ENCODE measurements at regions of chr6 and their contacts with region 1.

Region 1: DNA sequence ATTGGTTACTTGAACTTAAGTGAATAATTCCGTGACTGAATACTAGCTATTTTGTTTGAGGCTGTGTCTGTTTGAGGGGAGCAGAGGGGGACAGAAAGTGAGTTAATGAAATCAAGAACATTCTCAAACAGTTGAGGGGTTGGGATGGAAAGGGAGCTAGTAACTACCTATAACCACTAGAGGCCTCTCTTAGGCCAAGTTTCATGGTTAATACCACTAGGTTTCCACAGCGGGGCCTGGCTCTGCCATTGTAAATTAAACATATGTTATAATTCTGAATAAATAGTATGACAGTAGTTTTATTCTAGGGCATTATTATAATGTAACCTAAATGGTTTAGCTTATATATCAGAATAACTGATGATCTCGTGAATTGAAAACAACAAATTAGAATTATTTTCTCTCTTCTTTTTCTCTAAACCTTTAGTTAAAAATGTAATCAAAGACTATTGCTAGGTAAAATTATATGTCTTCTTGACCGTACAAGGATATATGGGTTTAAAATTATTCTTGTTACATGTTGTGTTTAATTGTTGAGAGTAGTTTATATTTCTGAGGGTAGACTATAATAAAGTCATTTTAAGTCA is 108.1 kb downstream of the BCKDHB start:
- DNase-seq: peak in 1 of 5 donors; percentile 31
- ATAC-seq: peak in 3 of 4 donors; percentile 75 to 83 (median 77)
- H3K4me3 ChIP-seq: no peak overlapping the region
- H3K27ac ChIP-seq: peak overlapping the region in 1 of 12 donors; percentile 7
- H3K4me1 ChIP-seq: peaks cover 0 to 31% (median 8%) of the 10 kb centered on the region in 12 donors
- H3K27me3 ChIP-seq: no peaks in the 10 kb centered on the region
- CTCF ChIP-seq: peak; percentile 52 to 85 (median 72)
- POLR2A ChIP-seq: no peak

Region 2: GRCh38 chr6:80143419-80143937 is 71.1 kb before region 1 on chr6:
- intact Hi-C with region 1: loop called in 2 of 10 experiments (anchors 5 kb)
- DNase-seq: peak in 4 of 5 donors; percentile 48 to 81 (median 63)
- ATAC-seq: peak; percentile 35 to 85 (median 69)
- H3K4me3 ChIP-seq: no peak overlapping the region
- H3K27ac ChIP-seq: peak overlapping the region in 4 of 12 donors; percentile 0 to 69 (median 14)
- H3K4me1 ChIP-seq: peaks cover 3 to 35% (median 22%) of the 10 kb centered on the region in 12 donors
- H3K27me3 ChIP-seq: no peaks in the 10 kb centered on the region
- CTCF ChIP-seq: no peak
- POLR2A ChIP-seq: no peak

Region 3: GRCh38 chr6:80325742-80326141 is 111.2 kb after region 1 on chr6:
- intact Hi-C with region 1: loop called in 4 of 10 experiments (anchors 10 kb)
- DNase-seq: no peak
- ATAC-seq: no peak
- H3K4me3 ChIP-seq: no peak overlapping the region
- H3K27ac ChIP-seq: no peak overlapping the region
- H3K4me1 ChIP-seq: peaks cover 0 to 4% (median 0%) of the 10 kb centered on the region in 12 donors
- H3K27me3 ChIP-seq: no peaks in the 10 kb centered on the region
- CTCF ChIP-seq: no peak
- POLR2A ChIP-seq: no peak

Region 4: GRCh38 chr6:80338201-80338836 is 123.8 kb after region 1 on chr6:
- intact Hi-C with region 1: loop called in 3 of 10 experiments (anchors 10 kb)
- DNase-seq: peak; percentile 35 to 78 (median 54)
- ATAC-seq: peak in 3 of 4 donors; percentile 74 to 77 (median 76)
- H3K4me3 ChIP-seq: peak overlapping the region in 2 of 12 donors; percentile 14 to 24
- H3K27ac ChIP-seq: no peak overlapping the region
- H3K4me1 ChIP-seq: peaks cover 0 to 6% (median 0%) of the 10 kb centered on the region in 12 donors
- H3K27me3 ChIP-seq: no peaks in the 10 kb centered on the region
- CTCF ChIP-seq: peak; percentile 43 to 83 (median 70)
- POLR2A ChIP-seq: no peak

Region 5: GRCh38 chr6:80477591-80477990 is 263.1 kb after region 1 on chr6:
- intact Hi-C with region 1: loop called in 1 of 10 experiments (anchors 10 kb)
- DNase-seq: no peak
- ATAC-seq: no peak
- H3K4me3 ChIP-seq: no peak overlapping the region
- H3K27ac ChIP-seq: no peak overlapping the region
- H3K4me1 ChIP-seq: no peaks in the 10 kb centered on the region
- H3K27me3 ChIP-seq: no peaks in the 10 kb centered on the region
- CTCF ChIP-seq: no peak
- POLR2A ChIP-seq: no peak

Region 6: DNA sequence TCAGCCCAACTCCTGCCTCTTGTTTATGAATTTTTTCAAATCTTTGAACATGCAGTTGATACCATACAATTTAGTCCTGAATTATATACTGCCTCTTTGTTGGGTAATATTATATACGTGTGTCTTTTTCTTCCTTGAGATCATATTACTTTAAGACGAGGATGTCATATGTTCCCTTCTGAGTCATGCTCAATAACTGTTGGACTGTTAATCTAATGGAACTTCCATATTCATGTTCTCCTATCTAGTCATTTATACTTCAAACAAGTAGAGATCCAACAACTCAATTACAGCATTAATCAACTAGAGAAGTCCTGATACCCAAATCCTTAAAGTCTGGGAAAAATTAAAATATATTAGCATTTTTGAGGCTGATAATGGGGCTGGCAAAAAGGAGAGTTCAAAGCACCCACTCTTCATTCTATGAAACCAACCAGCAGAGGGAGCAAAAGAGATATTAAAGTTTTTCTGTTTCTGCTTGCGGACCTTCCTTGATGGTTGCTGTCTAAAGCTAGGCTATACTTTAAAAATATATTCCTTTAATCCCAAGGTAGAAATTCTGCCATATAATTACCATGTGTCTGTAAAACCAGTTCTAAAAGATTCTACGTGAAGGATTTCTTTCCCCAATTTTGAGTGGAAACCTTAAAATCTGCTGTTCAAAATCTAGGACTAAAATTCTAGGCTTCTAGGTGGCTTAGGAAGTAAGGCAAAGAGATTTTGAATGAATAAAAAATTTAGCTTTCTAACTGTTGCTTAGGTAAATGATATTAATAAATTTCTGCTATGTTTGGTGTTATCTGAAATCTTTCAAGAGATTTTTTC is 390.8 kb after region 1 on chr6:
- intact Hi-C with region 1: loop called in 4 of 10 experiments (anchors 10 kb)
- DNase-seq: no peak
- ATAC-seq: peak in 2 of 4 donors; percentile 48 to 70
- H3K4me3 ChIP-seq: no peak overlapping the region
- H3K27ac ChIP-seq: no peak overlapping the region
- H3K4me1 ChIP-seq: peaks cover 0 to 25% (median 7%) of the 10 kb centered on the region in 12 donors
- H3K27me3 ChIP-seq: no peaks in the 10 kb centered on the region
- CTCF ChIP-seq: peak; percentile 28 to 70 (median 52)
- POLR2A ChIP-seq: no peak